ENCODE measurements at regions of chr19 and their contacts with region 1.

Region 1: GRCh38 chr19:21835810-21836444 is at the start of gene ZNF43:
- DNase-seq: peak; percentile 98
- ATAC-seq: peak; percentile 97
- H3K4me3 Mint-ChIP-seq: peak within 1 kb of the TSS; percentile 99
- H3K27ac Mint-ChIP-seq: peak within 1 kb of the TSS; percentile 100
- H3K4me1 Mint-ChIP-seq: peaks cover 40% of the 10 kb centered on the region
- H3K27me3 Mint-ChIP-seq: no peaks in the 10 kb centered on the region
- CTCF ChIP-seq: no peak
- total RNA-seq, gene ZNF43: 27.4 to 28.6 TPM

Region 2: GRCh38 chr19:21767065-21767800 is 68.7 kb before region 1 on chr19 and contains the start of gene ZNF100:
- CTCF ChIA-PET with region 1: interaction called, 13 read pairs
- POLR2A ChIA-PET with region 1: interaction called, 5 read pairs
- intact Hi-C with region 1: no loop called
- DNase-seq: peak; percentile 96
- ATAC-seq: peak; percentile 98
- H3K4me3 Mint-ChIP-seq: peak within 1 kb of the TSS; percentile 87
- H3K27ac Mint-ChIP-seq: peak within 1 kb of the TSS; percentile 82
- H3K4me1 Mint-ChIP-seq: peaks cover 23% of the 10 kb centered on the region
- H3K27me3 Mint-ChIP-seq: no peaks in the 10 kb centered on the region
- CTCF ChIP-seq: no peak
- total RNA-seq, gene ZNF100: 18.9 to 23.8 TPM

Region 3: GRCh38 chr19:21824679-21825078 is 11.2 kb before region 1 on chr19:
- CTCF ChIA-PET with region 1: interaction called, 3 read pairs
- POLR2A ChIA-PET with region 1: interaction called, 14 read pairs
- intact Hi-C with region 1: no loop called
- DNase-seq: no peak
- ATAC-seq: no peak
- H3K4me3 Mint-ChIP-seq: no peak overlapping the region
- H3K27ac Mint-ChIP-seq: no peak overlapping the region
- H3K4me1 Mint-ChIP-seq: peaks cover 15% of the 10 kb centered on the region
- H3K27me3 Mint-ChIP-seq: no peaks in the 10 kb centered on the region
- CTCF ChIP-seq: no peak

Region 4: GRCh38 chr19:21851596-21852345 is 15.8 kb after region 1 on chr19:
- CTCF ChIA-PET with region 1: interaction called, 7 read pairs
- POLR2A ChIA-PET with region 1: interaction called, 23 read pairs
- intact Hi-C with region 1: no loop called
- DNase-seq: peak; percentile 96
- ATAC-seq: peak; percentile 98
- H3K4me3 Mint-ChIP-seq: peak overlapping the region; percentile 89
- H3K27ac Mint-ChIP-seq: peak overlapping the region; percentile 89
- H3K4me1 Mint-ChIP-seq: peaks cover 30% of the 10 kb centered on the region
- H3K27me3 Mint-ChIP-seq: no peaks in the 10 kb centered on the region
- CTCF ChIP-seq: no peak

Region 5: GRCh38 chr19:21878646-21879045 is 42.7 kb after region 1 on chr19:
- CTCF ChIA-PET with region 1: no interaction called
- POLR2A ChIA-PET with region 1: no interaction called
- intact Hi-C with region 1: no loop called
- DNase-seq: no peak
- ATAC-seq: no peak
- H3K4me3 Mint-ChIP-seq: no peak overlapping the region
- H3K27ac Mint-ChIP-seq: no peak overlapping the region
- H3K4me1 Mint-ChIP-seq: no peaks in the 10 kb centered on the region
- H3K27me3 Mint-ChIP-seq: peaks cover 3% of the 10 kb centered on the region
- CTCF ChIP-seq: no peak